Activated CD4-positive, alpha-beta memory T cell treated with anti-CD3 and anti-CD28 coated beads, Interleukin-2, amount 10 ng/mL, durations not matched to agents 7 days and 5 days (primary cell): ENCODE measurements at regions of chr4 and their contacts with region 1.

Region 1: DNA sequence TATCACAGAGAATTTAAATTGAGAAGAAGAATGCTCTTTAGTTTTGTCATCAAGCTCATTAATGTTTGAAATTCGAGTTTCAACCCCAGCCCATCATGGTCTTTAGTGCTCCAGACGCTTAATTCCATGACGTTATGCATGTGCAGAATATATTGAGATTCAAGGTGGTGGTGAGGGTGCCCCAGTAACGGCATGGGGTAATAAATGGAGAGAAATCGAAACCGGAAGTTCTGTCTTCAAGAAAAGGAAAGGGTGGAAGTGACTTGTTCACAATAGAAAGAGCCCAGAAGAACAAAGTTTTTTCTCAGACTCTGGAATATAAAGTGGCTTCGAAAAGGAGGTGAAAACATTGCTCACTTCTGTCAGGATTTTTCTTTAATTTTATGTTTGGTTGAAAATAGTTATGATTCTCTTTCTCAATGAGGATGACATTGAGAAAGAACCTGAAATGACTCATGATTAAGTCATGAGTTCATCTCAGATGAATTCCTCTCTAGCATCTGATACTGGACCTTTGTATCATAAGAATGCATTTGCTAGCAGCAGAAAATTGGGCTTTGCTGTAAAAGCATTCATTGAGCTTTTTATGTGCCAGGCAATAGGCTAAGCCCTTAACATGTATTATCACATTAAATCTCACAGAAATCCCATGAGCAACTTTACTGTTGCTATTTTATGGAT is 779 bp upstream of the DDX60L start:
- DNase-seq: peak; percentile 60
- H3K4me3 Mint-ChIP-seq: peak overlapping the region; percentile 94
- H3K27ac Mint-ChIP-seq: peak overlapping the region; percentile 99
- H3K4me1 Mint-ChIP-seq: peaks cover 63% of the 10 kb centered on the region
- H3K27me3 Mint-ChIP-seq: no peaks in the 10 kb centered on the region

Region 2: DNA sequence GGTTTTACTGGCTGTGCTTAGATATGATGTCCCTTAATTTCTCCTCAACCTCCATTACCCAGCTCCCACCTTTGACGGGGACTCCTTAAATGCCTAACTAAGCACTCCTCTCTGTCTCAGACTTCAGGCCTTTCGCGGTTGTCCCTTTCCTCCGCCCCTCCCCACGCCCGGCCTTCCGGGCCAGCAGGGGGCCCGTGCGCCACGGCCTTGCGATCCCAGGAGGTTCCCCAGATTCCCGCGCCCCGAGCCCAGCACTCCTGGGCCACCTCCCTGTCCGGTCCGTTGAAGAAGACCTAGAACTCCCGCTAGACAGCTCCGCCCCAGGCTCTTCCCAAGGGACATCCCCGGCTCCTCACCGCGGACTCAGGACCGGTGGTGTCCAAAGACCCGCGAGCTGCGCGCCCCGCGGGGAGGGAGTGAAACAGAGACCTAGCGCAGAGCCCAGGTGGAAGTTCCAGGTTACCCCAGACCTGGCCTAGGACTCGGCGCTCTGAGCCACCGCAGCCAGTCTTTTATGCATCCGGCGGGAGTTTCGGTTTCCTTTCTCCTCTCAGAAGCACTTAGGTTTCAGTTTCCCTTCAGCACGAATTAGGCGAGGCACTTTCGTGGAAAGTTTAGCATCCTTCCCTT is 162.7 kb before region 1 on chr4 and contains the start of gene DDX60:
- CTCF ChIA-PET with region 1: interaction called, 14 read pairs
- POLR2A ChIA-PET with region 1: interaction called, 66 read pairs
- DNase-seq: peak; percentile 91
- H3K4me3 Mint-ChIP-seq: peak within 1 kb of the TSS; percentile 94
- H3K27ac Mint-ChIP-seq: peak within 1 kb of the TSS; percentile 97
- H3K4me1 Mint-ChIP-seq: peaks cover 58% of the 10 kb centered on the region
- H3K27me3 Mint-ChIP-seq: no peaks in the 10 kb centered on the region
- total RNA-seq, gene DDX60: 140 to 147 TPM

Region 3: GRCh38 chr4:168361365-168362024 is 119.6 kb before region 1 on chr4:
- CTCF ChIA-PET with region 1: no interaction called
- POLR2A ChIA-PET with region 1: no interaction called
- DNase-seq: no peak
- H3K4me3 Mint-ChIP-seq: no peak overlapping the region
- H3K27ac Mint-ChIP-seq: no peak overlapping the region
- H3K4me1 Mint-ChIP-seq: peaks cover 16% of the 10 kb centered on the region
- H3K27me3 Mint-ChIP-seq: no peaks in the 10 kb centered on the region

Region 4: DNA sequence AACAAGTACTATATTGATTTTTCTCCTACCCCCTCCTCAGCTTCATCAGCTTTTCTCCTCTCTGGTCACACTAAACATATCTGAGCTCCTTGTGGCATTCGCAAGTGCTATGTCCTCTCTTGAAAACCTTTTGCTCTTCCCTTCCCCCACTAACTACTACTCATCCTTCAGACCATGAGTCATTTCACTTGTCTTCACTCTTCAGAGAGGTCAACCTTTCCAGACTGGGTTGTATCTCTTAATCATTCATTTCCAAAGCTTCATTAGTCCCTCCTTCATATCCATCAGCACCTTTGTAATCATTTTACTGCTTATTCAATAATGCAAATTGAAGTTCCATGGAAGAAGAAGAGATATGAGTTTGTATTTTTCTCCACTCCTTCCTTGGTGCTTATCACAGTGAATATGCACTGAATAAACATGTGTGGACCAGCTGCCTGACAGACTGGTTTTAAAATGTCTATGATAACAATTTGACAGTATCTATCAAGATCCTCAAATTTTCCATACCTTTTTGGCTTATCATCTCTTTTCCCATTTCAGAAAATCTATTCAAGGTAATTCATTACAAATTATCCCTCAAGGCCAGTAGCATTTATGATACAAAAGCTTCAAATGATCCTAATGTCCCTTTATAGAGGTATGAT is 29.2 kb before region 1 on chr4:
- CTCF ChIA-PET with region 1: interaction called, 5 read pairs
- POLR2A ChIA-PET with region 1: interaction called, 21 read pairs
- DNase-seq: no peak
- H3K4me3 Mint-ChIP-seq: no peak overlapping the region
- H3K27ac Mint-ChIP-seq: peak overlapping the region; percentile 11
- H3K4me1 Mint-ChIP-seq: peaks cover 36% of the 10 kb centered on the region
- H3K27me3 Mint-ChIP-seq: no peaks in the 10 kb centered on the region

Region 5: DNA sequence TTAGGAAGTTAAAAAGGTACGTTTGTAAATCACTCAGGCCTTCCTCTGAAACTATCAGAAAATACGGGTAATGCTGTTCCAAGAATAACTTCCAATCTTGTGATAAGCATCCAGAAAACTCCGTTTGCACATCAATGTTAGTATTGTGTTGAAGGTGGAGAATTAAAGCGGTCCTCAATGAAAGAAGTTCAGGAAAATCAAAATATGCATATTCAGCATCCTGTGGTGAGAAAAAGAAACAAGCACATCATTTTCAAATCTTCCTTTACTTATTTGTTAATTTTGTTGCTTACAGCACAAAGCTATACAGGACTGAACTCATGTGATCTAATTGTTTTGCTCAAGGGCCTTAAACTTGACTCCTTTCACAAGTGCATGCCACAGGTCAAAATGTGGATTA is 19.2 kb before region 1 on chr4:
- CTCF ChIA-PET with region 1: no interaction called
- POLR2A ChIA-PET with region 1: interaction called, 12 read pairs
- DNase-seq: no peak
- H3K4me3 Mint-ChIP-seq: no peak overlapping the region
- H3K27ac Mint-ChIP-seq: no peak overlapping the region
- H3K4me1 Mint-ChIP-seq: no peaks in the 10 kb centered on the region
- H3K27me3 Mint-ChIP-seq: no peaks in the 10 kb centered on the region

Region 6: DNA sequence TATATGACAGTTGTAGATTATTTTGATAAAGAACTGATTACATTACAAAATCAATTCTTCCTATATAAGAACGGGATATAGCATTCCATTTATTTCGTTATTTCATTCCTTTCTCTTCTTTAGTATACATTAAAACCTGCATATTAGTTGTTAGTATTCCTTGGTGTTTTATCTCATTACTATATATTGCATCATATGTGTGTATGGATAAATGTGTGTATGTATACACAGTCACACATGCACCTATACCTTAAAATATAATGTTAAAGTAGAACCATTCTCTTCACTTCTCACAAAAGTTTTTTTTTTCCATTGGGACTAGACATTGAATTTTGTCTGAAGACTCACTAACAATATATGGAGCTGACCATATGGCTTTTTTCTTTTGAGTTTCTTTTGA is 10.5 kb after region 1 on chr4:
- CTCF ChIA-PET with region 1: no interaction called
- POLR2A ChIA-PET with region 1: no interaction called
- DNase-seq: no peak
- H3K4me3 Mint-ChIP-seq: no peak overlapping the region
- H3K27ac Mint-ChIP-seq: no peak overlapping the region
- H3K4me1 Mint-ChIP-seq: peaks cover 14% of the 10 kb centered on the region
- H3K27me3 Mint-ChIP-seq: peaks cover 14% of the 10 kb centered on the region